Endothelial cell of umbilical vein (primary cell): ENCODE measurements at regions of chr1 and their contacts with region 1.

Region 1: GRCh38 chr1:181105134-181106021 is 16.9 kb downstream of the IER5 start:
- DNase-seq: peak; percentile 86
- H3K4me3 ChIP-seq: peak overlapping the region; percentile 44 to 63 (median 46)
- H3K27ac ChIP-seq: peak overlapping the region; percentile 90
- H3K4me1 ChIP-seq: peaks cover 58% of the 10 kb centered on the region
- H3K27me3 ChIP-seq: no peaks in the 10 kb centered on the region
- CTCF ChIP-seq: no peak
- POLR2A ChIP-seq: peak; percentile 43

Region 2: GRCh38 chr1:180502360-180503273 is 602.8 kb before region 1 on chr1 and contains the start of gene ACBD6:
- CTCF ChIA-PET with region 1: no interaction called
- POLR2A ChIA-PET with region 1: interaction called, 4 read pairs
- dilution Hi-C with region 1: no loop called
- intact Hi-C with region 1: loop called (anchors 5 kb)
- DNase-seq: peak; percentile 93
- H3K4me3 ChIP-seq: peak within 1 kb of the TSS; percentile 32 to 81 (median 81)
- H3K27ac ChIP-seq: peak within 1 kb of the TSS; percentile 60
- H3K4me1 ChIP-seq: peaks cover 26% of the 10 kb centered on the region
- H3K27me3 ChIP-seq: no peaks in the 10 kb centered on the region
- CTCF ChIP-seq: peak in 1 of 2 donors; percentile 15
- POLR2A ChIP-seq: peak; percentile 18
- total RNA-seq, gene ACBD6: 52.8 and 56.4 TPM in 2 replicates

Region 3: DNA sequence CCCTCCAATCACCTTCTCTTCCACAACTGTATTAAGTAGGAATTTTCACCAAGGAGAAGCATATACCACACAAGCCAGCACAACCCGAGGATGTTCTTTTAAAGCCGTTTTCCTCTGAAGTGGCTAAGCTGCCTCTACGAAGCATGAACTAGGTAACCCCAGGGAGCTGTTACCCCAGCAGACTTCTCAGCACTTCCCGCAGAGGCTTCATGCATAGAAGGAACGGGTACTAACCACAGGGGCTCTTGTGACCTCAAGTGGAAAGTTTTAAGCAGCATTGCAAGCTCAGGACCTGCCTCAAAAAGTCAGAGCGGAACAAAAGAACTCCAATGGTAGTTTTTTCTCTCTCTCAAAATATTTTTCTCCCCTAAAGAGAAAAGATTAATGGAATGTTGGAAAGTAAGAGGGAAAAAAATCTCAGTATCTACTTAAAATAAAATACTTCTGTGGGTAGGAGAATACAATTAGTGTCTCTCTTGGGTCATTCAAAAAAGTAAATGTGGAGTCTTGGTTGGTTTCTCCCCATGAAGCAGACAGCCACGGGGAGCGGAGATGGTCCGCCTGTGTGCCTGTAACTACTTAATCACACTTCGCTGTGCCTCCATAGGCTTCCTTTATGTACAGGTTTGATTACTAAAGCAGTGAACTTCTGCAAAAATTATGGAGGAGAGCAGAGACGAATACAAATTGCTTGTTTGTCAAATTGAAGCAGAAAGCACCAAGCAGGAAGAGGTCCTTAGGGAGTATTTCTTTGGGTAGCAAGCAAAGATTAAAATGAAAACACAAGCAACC is 123.6 kb before region 1 on chr1:
- CTCF ChIA-PET with region 1: no interaction called
- POLR2A ChIA-PET with region 1: no interaction called
- dilution Hi-C with region 1: no loop called
- intact Hi-C with region 1: no loop called
- DNase-seq: no peak
- H3K4me3 ChIP-seq: no peak overlapping the region
- H3K27ac ChIP-seq: no peak overlapping the region
- H3K4me1 ChIP-seq: no peaks in the 10 kb centered on the region
- H3K27me3 ChIP-seq: no peaks in the 10 kb centered on the region
- CTCF ChIP-seq: no peak
- POLR2A ChIP-seq: no peak